Activated naive CD4-positive, alpha-beta T cell treated with anti-CD3 and anti-CD28 coated beads, Interleukin-2, amount 10 ng/mL, durations not matched to agents 7 days and 5 days (primary cell): ENCODE measurements at regions of chr5 and their contacts with region 1.

Region 1: GRCh38 chr5:43008369-43009153 is 31.6 kb downstream of the ANXA2R start:
- DNase-seq: peak; percentile 94
- H3K4me3 Mint-ChIP-seq: peak overlapping the region; percentile 77
- H3K27ac Mint-ChIP-seq: peak overlapping the region; percentile 99
- H3K4me1 Mint-ChIP-seq: peaks cover 36% of the 10 kb centered on the region
- H3K27me3 Mint-ChIP-seq: no peaks in the 10 kb centered on the region

Region 2: GRCh38 chr5:42994246-42995151 is 14.1 kb before region 1 on chr5:
- CTCF ChIA-PET with region 1: interaction called, 43 read pairs
- DNase-seq: peak; percentile 91
- H3K4me3 Mint-ChIP-seq: peak overlapping the region; percentile 97
- H3K27ac Mint-ChIP-seq: peak overlapping the region; percentile 99
- H3K4me1 Mint-ChIP-seq: peaks cover 27% of the 10 kb centered on the region
- H3K27me3 Mint-ChIP-seq: peaks cover 9% of the 10 kb centered on the region